ENCODE measurements at regions of chr3 and their contacts with region 1.

Region 1: GRCh38 chr3:4271834-4272233 is 31.3 kb upstream of the SETMAR start:
- DNase-seq: peak; percentile 8
- ATAC-seq: peak; percentile 43; the same call in 1 of the 3 replicates
- H3K4me3 ChIP-seq: no peak overlapping the region
- H3K27ac ChIP-seq: no peak overlapping the region
- H3K4me1 ChIP-seq: no peaks in the 10 kb centered on the region
- H3K27me3 ChIP-seq: no peaks in the 10 kb centered on the region
- CTCF ChIP-seq: peak; percentile 45
- EP300 ChIP-seq: no peak
- POLR2A ChIP-seq: no peak
- RAD21 ChIP-seq: no peak

Region 2: GRCh38 chr3:4006288-4006687 is 265.5 kb before region 1 on chr3:
- CTCF ChIA-PET with region 1: no interaction called
- POLR2A ChIA-PET with region 1: no interaction called
- in situ Hi-C with region 1: no loop called
- intact Hi-C with region 1: loop called (anchors 10 kb)
- DNase-seq: no peak
- ATAC-seq: no peak
- H3K4me3 ChIP-seq: no peak overlapping the region
- H3K27ac ChIP-seq: no peak overlapping the region
- H3K4me1 ChIP-seq: no peaks in the 10 kb centered on the region
- H3K27me3 ChIP-seq: no peaks in the 10 kb centered on the region
- CTCF ChIP-seq: no peak
- EP300 ChIP-seq: no peak
- POLR2A ChIP-seq: no peak
- RAD21 ChIP-seq: no peak

Measured in HepG2 (cell line).